Ascending aorta (tissue), 2 donors: ENCODE measurements at regions of chr7 and their contacts with region 1.

Region 1: GRCh38 chr7:132351954-132352499 is 224.2 kb downstream of the PLXNA4 start:
- DNase-seq: peak; percentile 11 to 83
- H3K4me3 ChIP-seq: peak overlapping the region; percentile 35
- H3K27ac ChIP-seq: peak overlapping the region; percentile 60 to 87
- H3K4me1 ChIP-seq: peaks cover 0 to 12% of the 10 kb centered on the region in 2 donors
- H3K27me3 ChIP-seq: no peaks in the 10 kb centered on the region
- CTCF ChIP-seq: no peak

Region 2: DNA sequence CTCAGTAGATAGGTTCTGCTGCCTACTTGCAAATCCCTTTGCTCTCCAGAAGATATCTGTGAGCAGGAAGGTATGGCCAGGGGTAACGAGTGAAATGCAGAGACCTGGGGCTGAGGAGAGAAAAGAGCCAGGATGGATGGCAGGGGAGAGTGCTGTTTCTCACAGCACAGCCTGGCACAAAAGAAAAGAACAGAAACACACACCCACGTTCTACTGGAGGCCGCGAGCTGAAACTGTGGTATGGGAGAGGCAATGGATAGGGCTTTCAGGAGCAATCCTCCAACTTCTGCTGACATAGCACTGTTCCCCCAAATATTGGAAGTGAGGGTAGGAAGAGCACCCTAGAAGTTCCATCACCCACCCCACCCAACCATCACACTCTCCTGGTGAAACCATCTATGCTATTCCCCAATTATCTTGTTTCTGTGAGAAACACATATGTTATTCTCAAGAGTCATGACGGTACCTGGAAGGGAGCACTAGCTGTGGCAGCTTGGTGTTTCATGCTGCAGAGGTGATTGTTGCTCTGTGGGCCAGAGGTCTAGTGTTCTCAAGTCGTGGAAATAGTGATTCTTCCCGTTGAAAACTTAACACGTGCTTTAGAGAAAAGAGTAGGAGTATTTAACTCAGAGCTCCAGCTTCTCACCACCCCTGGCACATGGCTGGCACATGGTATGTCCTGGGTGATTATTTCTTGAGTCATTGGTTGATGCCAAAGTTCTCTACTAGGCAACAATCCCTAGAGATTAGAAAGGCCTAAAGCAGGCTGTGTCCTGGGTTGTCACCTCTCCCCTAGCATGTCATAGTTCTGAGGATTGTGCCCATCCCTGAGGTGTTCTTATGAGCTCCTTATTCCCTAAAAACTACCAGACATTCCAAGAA is 25.9 kb after region 1 on chr7:
- intact Hi-C with region 1: loop called (anchors 2 kb)
- DNase-seq: no peak
- H3K4me3 ChIP-seq: no peak overlapping the region
- H3K27ac ChIP-seq: peak overlapping the region in 1 of 2 donors; percentile 19
- H3K4me1 ChIP-seq: peaks cover 0 to 34% of the 10 kb centered on the region in 2 donors
- H3K27me3 ChIP-seq: no peaks in the 10 kb centered on the region
- CTCF ChIP-seq: no peak

Region 3: DNA sequence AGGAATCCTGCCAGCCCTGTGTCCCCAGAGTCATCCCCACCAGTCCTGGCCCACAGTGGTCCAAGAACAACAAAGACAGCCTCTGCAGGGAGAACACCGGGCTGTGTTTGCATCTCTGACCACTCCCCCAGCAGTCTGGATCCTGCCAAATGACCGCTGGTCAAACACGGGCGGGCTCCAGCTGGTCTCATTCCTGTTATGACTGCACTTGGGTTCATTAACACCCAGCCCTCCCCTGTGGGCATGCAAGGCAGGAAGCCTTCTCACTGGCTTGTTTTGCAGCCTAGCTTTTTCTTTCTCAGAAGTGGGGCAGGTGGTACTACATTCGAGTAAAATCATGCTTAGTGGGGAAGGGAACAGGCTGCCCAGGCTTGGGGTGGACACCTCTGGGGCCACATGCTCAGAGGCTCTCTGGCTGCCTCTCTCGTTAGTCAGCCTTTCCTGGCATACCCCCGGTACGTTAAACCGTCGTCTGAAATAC is 34.2 kb after region 1 on chr7:
- intact Hi-C with region 1: loop called (anchors 2 kb)
- DNase-seq: peak; percentile 51 to 89
- H3K4me3 ChIP-seq: peak overlapping the region in 1 of 2 donors; percentile 9
- H3K27ac ChIP-seq: peak overlapping the region; percentile 63 to 69
- H3K4me1 ChIP-seq: peaks cover 0 to 17% of the 10 kb centered on the region in 2 donors
- H3K27me3 ChIP-seq: no peaks in the 10 kb centered on the region
- CTCF ChIP-seq: no peak

Region 4: DNA sequence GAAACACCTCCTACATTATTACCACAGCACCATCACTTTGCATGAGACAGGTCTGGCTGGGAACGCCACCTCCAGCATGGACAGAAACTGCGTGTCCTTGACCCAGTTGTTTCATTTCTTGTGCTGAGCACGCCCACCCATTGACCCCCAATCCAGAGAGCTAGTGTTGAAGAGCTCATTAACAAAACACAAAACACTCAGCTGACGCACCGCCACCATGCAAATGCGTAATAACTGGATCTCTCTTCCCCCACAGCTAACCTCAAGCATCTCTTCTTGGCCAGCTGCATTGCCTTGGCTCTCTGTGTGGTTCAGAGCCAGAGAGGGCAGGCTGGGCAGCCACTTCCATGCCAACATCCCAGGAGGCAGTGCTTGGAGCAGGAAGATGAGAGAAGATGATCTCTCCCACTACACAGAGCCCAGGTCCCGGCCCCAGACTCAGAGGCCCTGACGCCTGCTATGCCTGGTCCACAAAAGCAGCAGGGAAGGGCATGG is 50.8 kb after region 1 on chr7:
- intact Hi-C with region 1: loop called (anchors 1 kb)
- DNase-seq: peak in 1 of 2 donors; percentile 85
- H3K4me3 ChIP-seq: peak overlapping the region in 1 of 2 donors; percentile 35
- H3K27ac ChIP-seq: peak overlapping the region; percentile 78 to 79
- H3K4me1 ChIP-seq: peaks cover 15 to 46% of the 10 kb centered on the region in 2 donors
- H3K27me3 ChIP-seq: no peaks in the 10 kb centered on the region
- CTCF ChIP-seq: no peak

Region 5: GRCh38 chr7:132430861-132431822 is 79.1 kb after region 1 on chr7:
- intact Hi-C with region 1: loop called (anchors 5 kb)
- DNase-seq: peak; percentile 24 to 89
- H3K4me3 ChIP-seq: no peak overlapping the region
- H3K27ac ChIP-seq: peak overlapping the region; percentile 51 to 69
- H3K4me1 ChIP-seq: peaks cover 0 to 45% of the 10 kb centered on the region in 2 donors
- H3K27me3 ChIP-seq: no peaks in the 10 kb centered on the region
- CTCF ChIP-seq: no peak

Region 6: DNA sequence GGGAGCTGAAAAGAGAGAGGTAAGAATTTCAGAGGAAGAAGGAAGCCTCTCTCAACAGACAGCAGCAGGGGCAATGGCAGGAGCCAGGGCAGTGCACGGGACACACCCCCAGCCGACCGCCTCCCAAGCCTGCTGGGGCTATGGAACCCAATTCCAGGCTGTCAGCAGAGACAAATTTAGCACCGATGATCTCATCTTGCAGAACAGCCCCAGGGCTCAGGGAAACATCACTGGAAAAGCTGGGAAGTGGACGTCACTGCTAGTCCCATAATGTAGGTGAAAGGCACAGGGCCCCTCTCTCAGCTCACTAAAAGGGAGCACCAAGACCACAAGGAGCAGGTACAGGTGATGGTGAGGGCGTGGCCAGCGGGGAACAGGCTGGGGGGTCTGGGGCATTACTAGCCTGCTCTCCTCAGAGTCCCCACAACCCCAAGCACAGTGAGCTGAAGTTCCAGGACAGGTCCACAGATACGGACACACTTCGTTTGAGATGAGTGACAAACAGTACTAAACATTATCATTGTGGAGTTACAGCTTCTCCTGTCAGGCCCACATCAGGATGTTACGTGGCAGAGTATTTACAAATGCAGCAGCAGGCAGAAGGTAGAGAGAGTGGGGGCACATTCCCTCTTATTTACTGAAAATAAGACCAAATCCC is 120.6 kb after region 1 on chr7:
- intact Hi-C with region 1: loop called (anchors 5 kb)
- DNase-seq: peak; percentile 28 to 86
- H3K4me3 ChIP-seq: no peak overlapping the region
- H3K27ac ChIP-seq: peak overlapping the region; percentile 67 to 81
- H3K4me1 ChIP-seq: peaks cover 0 to 24% of the 10 kb centered on the region in 2 donors
- H3K27me3 ChIP-seq: no peaks in the 10 kb centered on the region
- CTCF ChIP-seq: no peak

Region 7: DNA sequence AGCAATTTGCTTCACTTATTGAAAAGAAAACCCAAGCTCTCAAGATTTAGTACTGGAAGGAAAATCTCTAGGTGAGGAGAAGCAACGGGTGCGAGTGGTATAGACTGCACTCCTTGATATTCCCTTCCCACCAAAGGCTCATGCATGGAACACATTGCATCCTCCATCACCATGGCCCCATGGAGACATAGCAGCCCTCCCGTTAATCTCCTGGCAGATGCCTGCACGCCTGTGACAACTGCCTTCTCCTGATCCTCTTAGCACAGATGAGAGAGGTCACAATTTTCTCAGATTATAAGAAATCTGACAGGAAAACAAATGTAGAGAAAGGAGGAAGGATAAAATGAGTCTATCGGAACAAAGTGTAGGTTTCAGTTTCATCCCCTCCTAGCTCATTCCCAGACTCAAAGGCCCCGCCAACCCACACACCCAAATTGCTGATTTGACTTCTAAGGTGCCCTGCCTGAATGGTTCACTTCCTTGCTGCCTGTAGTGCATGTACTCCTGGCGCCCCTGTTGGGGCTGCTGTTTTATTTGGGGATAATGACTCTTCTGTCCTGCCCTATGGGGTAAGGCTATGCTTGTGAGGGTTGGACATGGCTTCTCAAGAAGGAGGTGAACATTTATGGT is 174.2 kb after region 1 on chr7:
- intact Hi-C with region 1: no loop called
- DNase-seq: peak in 1 of 2 donors; percentile 8
- H3K4me3 ChIP-seq: no peak overlapping the region
- H3K27ac ChIP-seq: no peak overlapping the region
- H3K4me1 ChIP-seq: no peaks in the 10 kb centered on the region
- H3K27me3 ChIP-seq: no peaks in the 10 kb centered on the region
- CTCF ChIP-seq: no peak